ENCODE measurements at regions of chr17 and their contacts with region 1.

Region 1: GRCh38 chr17:68247445-68248198 is at the start of gene AMZ2:
- DNase-seq: peak; percentile 81
- ATAC-seq: peak; percentile 92
- H3K4me3 ChIP-seq: peak within 1 kb of the TSS; percentile 85
- H3K27ac ChIP-seq: peak within 1 kb of the TSS; percentile 91
- H3K4me1 ChIP-seq: peaks cover 10% of the 10 kb centered on the region
- H3K27me3 ChIP-seq: no peaks in the 10 kb centered on the region
- CTCF ChIP-seq: no peak
- EP300 ChIP-seq: no peak
- POLR2A ChIP-seq: peak; percentile 95
- RAD21 ChIP-seq: no peak
- polyA plus RNA-seq, gene AMZ2: 127 to 135 TPM

Region 2: DNA sequence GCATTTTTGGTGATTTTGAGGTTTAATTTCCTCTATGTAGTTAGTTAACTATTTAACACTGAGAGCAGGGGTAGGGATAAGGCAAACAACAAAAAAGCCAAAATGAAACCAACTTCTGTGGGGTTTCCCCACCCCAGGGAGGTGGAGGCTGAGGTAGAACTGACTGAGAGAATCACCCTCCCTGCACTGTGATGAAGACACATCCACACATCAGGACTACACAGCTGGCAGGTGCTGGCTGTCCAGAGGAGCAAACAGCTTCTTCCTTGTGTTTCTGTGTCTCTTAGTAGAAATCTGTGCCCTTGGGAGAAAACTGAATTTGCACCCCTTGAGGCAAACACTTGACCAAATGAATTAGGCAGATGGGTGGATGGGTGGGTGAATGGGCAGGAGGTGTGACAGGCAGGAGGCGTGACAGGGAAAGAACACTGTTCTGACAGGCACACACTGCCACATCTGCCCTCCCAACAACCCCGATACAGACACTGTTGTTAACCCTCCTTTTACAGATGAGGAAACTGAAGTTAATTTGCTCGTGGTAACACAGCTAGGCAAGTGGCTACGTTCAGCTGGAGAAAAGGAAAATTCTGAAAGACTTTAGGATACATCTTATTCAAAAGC is 62.7 kb before region 1 on chr17:
- CTCF ChIA-PET with region 1: interaction called, 5 read pairs
- POLR2A ChIA-PET with region 1: interaction called, 32 read pairs
- RAD21 ChIA-PET with region 1: interaction called, 22 read pairs
- SMC1A ChIA-PET with region 1: interaction called, 9 read pairs
- in situ Hi-C with region 1: no loop called
- intact Hi-C with region 1: loop called (anchors 5 kb)
- DNase-seq: no peak
- ATAC-seq: peak; percentile 74
- H3K4me3 ChIP-seq: peak overlapping the region; percentile 50; the same call in 1 of the 2 replicates
- H3K27ac ChIP-seq: peak overlapping the region; percentile 78
- H3K4me1 ChIP-seq: peaks cover 34% of the 10 kb centered on the region
- H3K27me3 ChIP-seq: no peaks in the 10 kb centered on the region
- CTCF ChIP-seq: no peak
- EP300 ChIP-seq: no peak
- POLR2A ChIP-seq: no peak
- RAD21 ChIP-seq: no peak

Region 3: GRCh38 chr17:68205251-68205807 is 42.3 kb before region 1 on chr17:
- CTCF ChIA-PET with region 1: interaction called, 6 read pairs
- POLR2A ChIA-PET with region 1: interaction called, 27 read pairs
- RAD21 ChIA-PET with region 1: interaction called, 19 read pairs
- SMC1A ChIA-PET with region 1: interaction called, 16 read pairs
- in situ Hi-C with region 1: no loop called
- intact Hi-C with region 1: loop called (anchors 5 kb)
- DNase-seq: no peak
- ATAC-seq: peak; percentile 92
- H3K4me3 ChIP-seq: peak overlapping the region; percentile 90
- H3K27ac ChIP-seq: peak overlapping the region; percentile 79
- H3K4me1 ChIP-seq: peaks cover 8% of the 10 kb centered on the region
- H3K27me3 ChIP-seq: 0 out of 4 replicates have a peak, but pooled peaks cover 2 to 4% of the 10 kb centered on the region in 2 experiments
- CTCF ChIP-seq: peak; percentile 85 to 96 (median 92)
- EP300 ChIP-seq: no peak
- POLR2A ChIP-seq: peak; percentile 79
- RAD21 ChIP-seq: peak; percentile 55

Region 4: GRCh38 chr17:68228817-68229572 is 18.6 kb before region 1 on chr17:
- CTCF ChIA-PET with region 1: no interaction called
- POLR2A ChIA-PET with region 1: interaction called, 10 read pairs
- RAD21 ChIA-PET with region 1: interaction called, 7 read pairs
- SMC1A ChIA-PET with region 1: interaction called, 9 read pairs
- in situ Hi-C with region 1: no loop called
- intact Hi-C with region 1: no loop called
- DNase-seq: no peak
- ATAC-seq: no peak; the same call in 2 of the 3 replicates
- H3K4me3 ChIP-seq: no peak overlapping the region
- H3K27ac ChIP-seq: no peak overlapping the region
- H3K4me1 ChIP-seq: peaks cover 6% of the 10 kb centered on the region
- H3K27me3 ChIP-seq: no peaks in the 10 kb centered on the region
- CTCF ChIP-seq: no peak
- EP300 ChIP-seq: no peak
- POLR2A ChIP-seq: no peak
- RAD21 ChIP-seq: no peak

Region 5: DNA sequence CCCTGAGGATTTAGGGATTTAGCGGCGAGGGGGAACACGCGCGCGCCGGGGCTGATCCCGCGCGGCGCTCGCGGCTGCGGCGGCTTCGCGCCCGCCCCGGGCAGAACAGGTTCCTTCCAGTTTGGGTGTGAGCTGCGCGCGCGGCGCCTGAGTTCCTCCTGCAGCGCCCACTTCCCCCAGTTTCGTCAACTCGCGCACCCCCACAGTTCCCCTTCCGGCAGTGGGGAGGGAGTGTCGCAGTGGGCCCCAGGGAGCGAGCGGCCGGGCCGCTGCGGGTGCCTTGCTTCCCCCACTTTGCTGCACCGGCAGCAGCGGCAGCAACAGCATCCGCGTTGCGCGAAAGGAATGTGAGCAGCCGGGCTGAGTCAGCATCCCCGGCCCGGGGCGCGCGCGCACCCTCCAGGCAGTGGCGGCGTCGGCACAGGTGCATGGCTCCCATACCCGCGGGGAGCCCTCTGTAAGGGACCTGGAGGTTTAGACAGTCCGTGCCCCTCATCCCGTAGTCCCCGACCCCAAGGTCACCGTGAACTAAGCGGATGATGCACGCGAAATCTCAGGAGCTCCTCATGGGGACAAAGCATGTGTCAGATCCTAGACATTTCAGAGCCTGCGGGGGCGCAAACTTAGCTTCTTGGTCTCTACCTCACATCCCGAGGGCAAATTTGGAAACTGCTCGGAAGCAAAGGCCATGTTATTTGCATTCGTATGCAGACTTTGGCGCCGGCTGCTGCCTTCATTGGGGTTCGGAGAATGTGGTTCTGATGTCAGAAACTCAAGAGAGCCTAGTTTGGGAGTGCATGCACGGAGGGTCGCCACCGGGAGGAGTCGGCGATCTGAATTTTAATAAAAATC is 44.4 kb after region 1 on chr17:
- CTCF ChIA-PET with region 1: no interaction called
- POLR2A ChIA-PET with region 1: interaction called, 28 read pairs
- RAD21 ChIA-PET with region 1: interaction called, 5 read pairs
- SMC1A ChIA-PET with region 1: interaction called, 3 read pairs
- in situ Hi-C with region 1: no loop called
- intact Hi-C with region 1: loop called (anchors 5 kb)
- DNase-seq: peak; percentile 70
- ATAC-seq: peak; percentile 78
- H3K4me3 ChIP-seq: peak overlapping the region; percentile 74
- H3K27ac ChIP-seq: peak overlapping the region; percentile 95
- H3K4me1 ChIP-seq: peaks cover 22% of the 10 kb centered on the region
- H3K27me3 ChIP-seq: no peaks in the 10 kb centered on the region
- CTCF ChIP-seq: peak; percentile 0 to 24 (median 11); a peak in 2 of 6 replicates
- EP300 ChIP-seq: peak in 1 of 2 experiments; percentile 46; a peak in 1 of 4 replicates
- POLR2A ChIP-seq: peak; percentile 87
- RAD21 ChIP-seq: no peak

Region 6: DNA sequence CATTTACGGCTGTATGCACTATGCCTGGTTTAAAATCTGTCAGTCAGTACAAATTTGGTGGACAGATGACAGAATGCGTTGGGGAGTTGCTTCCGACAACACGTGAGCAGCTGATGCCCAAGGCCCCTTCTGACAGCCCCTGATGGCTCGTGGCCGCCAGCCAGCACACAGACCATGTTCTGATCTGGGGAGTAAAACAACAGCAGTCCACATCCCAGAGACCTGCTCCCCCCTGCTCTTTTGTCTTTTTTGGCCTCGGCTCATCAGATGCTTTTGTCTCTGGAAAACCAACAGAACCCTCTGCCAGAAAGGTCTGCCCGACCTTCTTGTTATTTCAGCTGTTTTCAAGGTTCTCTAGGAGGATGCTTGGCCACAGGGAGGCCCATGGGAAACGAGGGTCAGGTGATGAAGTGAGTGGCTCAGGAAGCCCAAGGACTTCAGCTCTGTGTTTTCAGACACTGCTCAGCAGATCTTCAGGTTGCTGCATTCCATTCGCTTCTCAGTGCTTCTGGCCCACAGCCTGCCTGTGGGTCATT is 54.5 kb after region 1 on chr17:
- CTCF ChIA-PET with region 1: no interaction called
- POLR2A ChIA-PET with region 1: no interaction called
- RAD21 ChIA-PET with region 1: no interaction called
- SMC1A ChIA-PET with region 1: no interaction called
- in situ Hi-C with region 1: no loop called
- intact Hi-C with region 1: no loop called
- DNase-seq: no peak
- ATAC-seq: no peak
- H3K4me3 ChIP-seq: no peak overlapping the region
- H3K27ac ChIP-seq: no peak overlapping the region
- H3K4me1 ChIP-seq: no peaks in the 10 kb centered on the region
- H3K27me3 ChIP-seq: no peaks in the 10 kb centered on the region
- CTCF ChIP-seq: no peak
- EP300 ChIP-seq: no peak
- POLR2A ChIP-seq: no peak
- RAD21 ChIP-seq: no peak

Region 7: DNA sequence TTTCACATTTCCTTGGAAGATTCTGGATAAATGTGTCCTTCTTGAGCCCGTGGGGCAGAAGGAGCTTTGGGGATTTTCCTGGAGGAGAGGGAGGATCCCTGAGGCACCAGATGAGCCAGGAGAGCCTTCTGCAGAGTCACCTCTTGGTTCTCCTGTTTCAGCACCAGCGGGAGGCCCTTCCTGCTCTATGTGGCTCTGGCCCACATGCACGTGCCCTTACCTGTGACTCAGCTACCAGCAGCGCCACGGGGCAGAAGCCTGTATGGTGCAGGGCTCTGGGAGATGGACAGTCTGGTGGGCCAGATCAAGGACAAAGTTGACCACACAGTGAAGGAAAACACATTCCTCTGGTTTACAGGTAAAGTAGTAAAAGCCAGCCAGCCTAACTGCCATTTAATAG is 120.8 kb after region 1 on chr17:
- CTCF ChIA-PET with region 1: no interaction called
- POLR2A ChIA-PET with region 1: no interaction called
- RAD21 ChIA-PET with region 1: no interaction called
- SMC1A ChIA-PET with region 1: no interaction called
- in situ Hi-C with region 1: no loop called
- intact Hi-C with region 1: no loop called
- DNase-seq: no peak
- ATAC-seq: no peak
- H3K4me3 ChIP-seq: no peak overlapping the region
- H3K27ac ChIP-seq: no peak overlapping the region
- H3K4me1 ChIP-seq: no peaks in the 10 kb centered on the region
- H3K27me3 ChIP-seq: no peaks in the 10 kb centered on the region; a peak in 1 of 4 replicates
- CTCF ChIP-seq: no peak
- EP300 ChIP-seq: no peak
- POLR2A ChIP-seq: no peak
- RAD21 ChIP-seq: no peak